ENCODE measurements at regions of chr10 and their contacts with region 1.

Region 1: DNA sequence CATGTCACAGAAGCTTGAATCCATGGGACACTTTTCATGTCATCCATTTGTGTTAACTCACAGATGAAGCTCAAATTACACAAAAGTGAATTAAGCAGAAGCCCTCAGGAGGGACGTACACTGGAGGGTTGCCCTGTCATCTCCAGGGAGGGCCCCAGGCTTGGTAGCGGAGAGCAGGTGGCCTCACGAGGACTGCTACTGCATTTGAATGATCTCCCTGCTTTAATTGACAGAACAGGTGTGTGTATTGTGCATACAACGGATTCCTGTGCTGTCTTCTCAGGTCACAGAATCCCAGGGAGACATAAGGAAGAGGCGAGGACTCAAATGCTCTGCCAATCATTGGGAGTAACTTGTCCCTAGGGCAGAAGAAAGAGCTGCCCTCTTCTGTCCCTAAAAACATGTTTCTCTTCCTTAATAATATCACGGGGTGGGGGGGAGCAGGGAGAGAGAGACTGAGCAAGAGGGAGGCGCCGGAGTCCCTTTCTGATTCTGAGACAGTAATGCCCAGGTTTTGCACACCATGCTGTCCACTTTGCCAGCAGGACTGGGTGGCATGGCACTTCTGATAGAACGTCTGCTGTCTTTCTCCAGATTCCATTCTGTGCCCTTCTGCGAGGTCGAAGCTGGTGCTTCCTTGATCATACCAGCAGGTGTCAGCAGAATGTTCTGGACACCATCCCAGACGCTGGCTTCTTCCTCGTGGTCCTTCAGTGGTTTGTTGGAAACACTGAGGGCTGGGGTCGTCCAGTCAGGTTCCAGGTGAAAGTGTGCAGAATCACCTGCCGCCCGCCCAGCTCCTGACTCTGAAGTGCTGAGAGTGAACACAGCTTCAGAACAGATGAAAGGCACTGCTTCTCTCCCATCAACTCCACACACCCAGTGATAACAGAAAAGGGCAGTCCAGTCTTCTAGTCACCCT is 26.2 kb upstream of the RASGEF1A start:
- DNase-seq: peak; percentile 64
- H3K4me3 ChIP-seq: no peak overlapping the region
- H3K27ac ChIP-seq: no peak overlapping the region
- H3K4me1 ChIP-seq: no peaks in the 10 kb centered on the region
- CTCF ChIP-seq: peak; percentile 85

Region 2: GRCh38 chr10:43461950-43462349 is 168.9 kb after region 1 on chr10:
- CTCF ChIA-PET with region 1: no interaction called
- POLR2A ChIA-PET with region 1: interaction called, 3 read pairs
- intact Hi-C with region 1: loop called (anchors 1 kb)
- DNase-seq: peak; percentile 87
- H3K4me3 ChIP-seq: no peak overlapping the region
- H3K27ac ChIP-seq: no peak overlapping the region
- H3K4me1 ChIP-seq: no peaks in the 10 kb centered on the region
- CTCF ChIP-seq: peak; percentile 91